Ascending aorta (tissue), 2 donors: ENCODE measurements at regions of chr9 and their contacts with region 1.

Region 1: DNA sequence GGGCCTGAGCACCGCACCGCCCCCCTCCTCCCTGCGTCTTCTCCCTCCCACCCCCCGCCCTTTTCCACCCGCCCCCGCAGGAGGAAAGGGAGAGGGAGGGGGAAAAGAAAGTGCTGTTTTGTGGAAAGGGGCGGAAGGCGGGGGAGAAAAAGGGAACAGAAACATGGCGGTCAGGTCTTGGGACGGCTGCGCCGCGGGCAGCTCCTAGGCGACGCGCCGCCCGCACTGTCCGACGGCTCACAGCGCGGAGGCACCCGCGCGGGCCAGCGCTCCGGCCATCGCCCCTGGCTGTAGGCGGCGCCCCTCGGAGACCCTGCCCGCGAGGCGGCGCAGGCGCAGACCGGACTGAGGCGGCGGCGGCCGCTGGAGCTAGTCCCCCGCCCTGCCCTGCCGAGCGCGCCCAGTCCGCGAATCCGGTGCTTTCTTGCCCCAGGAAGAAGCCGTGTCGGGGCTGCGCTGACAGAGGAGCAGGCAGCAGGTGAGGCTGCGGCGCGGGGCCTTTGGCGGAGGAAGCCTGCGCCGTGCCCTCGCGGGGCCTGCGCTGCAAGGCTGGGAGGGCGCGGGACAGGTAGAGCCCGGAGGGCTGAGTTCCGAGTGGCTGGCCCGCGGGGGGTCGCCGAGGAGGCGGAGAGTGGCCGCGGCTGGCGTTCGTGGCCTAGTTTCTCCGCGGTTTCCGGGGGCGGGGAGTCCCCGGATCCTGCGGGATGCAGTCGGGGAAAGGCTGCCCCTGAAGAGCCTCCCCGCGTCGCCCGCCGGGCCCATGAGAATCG is at the start of gene DENND4C:
- DNase-seq: peak; percentile 44 to 90
- H3K4me3 ChIP-seq: peak within 1 kb of the TSS; percentile 90 to 92
- H3K27ac ChIP-seq: peak within 1 kb of the TSS; percentile 97 to 98
- H3K4me1 ChIP-seq: peaks cover 0 to 18% of the 10 kb centered on the region in 2 donors
- H3K27me3 ChIP-seq: no peaks in the 10 kb centered on the region
- CTCF ChIP-seq: no peak
- total RNA-seq, gene DENND4C: 41.5 TPM

Region 2: GRCh38 chr9:19048966-19049916 is 181.3 kb before region 1 on chr9 and contains the start of gene RRAGA:
- intact Hi-C with region 1: loop called (anchors 2 kb)
- DNase-seq: peak; percentile 70 to 97
- H3K4me3 ChIP-seq: peak within 1 kb of the TSS; percentile 77 to 89
- H3K27ac ChIP-seq: peak within 1 kb of the TSS; percentile 98
- H3K4me1 ChIP-seq: peaks cover 8 to 14% of the 10 kb centered on the region in 2 donors
- H3K27me3 ChIP-seq: no peaks in the 10 kb centered on the region
- CTCF ChIP-seq: peak; percentile 81 to 87 (median 86)
- total RNA-seq, gene RRAGA: 57.3 TPM

Region 3: GRCh38 chr9:19127881-19128500 is 102.5 kb before region 1 on chr9:
- intact Hi-C with region 1: loop called (anchors 2 kb)
- DNase-seq: peak in 1 of 2 donors; percentile 72
- H3K4me3 ChIP-seq: peak overlapping the region; percentile 79 to 85
- H3K27ac ChIP-seq: peak overlapping the region; percentile 96 to 97
- H3K4me1 ChIP-seq: peaks cover 10 to 11% of the 10 kb centered on the region in 2 donors
- H3K27me3 ChIP-seq: no peaks in the 10 kb centered on the region
- CTCF ChIP-seq: no peak

Region 4: GRCh38 chr9:19184144-19184917 is 46.2 kb before region 1 on chr9:
- intact Hi-C with region 1: loop called (anchors 2 kb)
- DNase-seq: peak; percentile 90 to 96
- H3K4me3 ChIP-seq: peak overlapping the region in 1 of 2 donors; percentile 10
- H3K27ac ChIP-seq: peak overlapping the region; percentile 93 to 96
- H3K4me1 ChIP-seq: peaks cover 10 to 18% of the 10 kb centered on the region in 2 donors
- H3K27me3 ChIP-seq: no peaks in the 10 kb centered on the region
- CTCF ChIP-seq: no peak

Region 5: GRCh38 chr9:19379697-19380046 is 149.1 kb after region 1 on chr9:
- intact Hi-C with region 1: loop called (anchors 2 kb)
- DNase-seq: no peak
- H3K4me3 ChIP-seq: peak overlapping the region; percentile 69 to 73
- H3K27ac ChIP-seq: peak overlapping the region; percentile 88 to 91
- H3K4me1 ChIP-seq: peaks cover 0 to 24% of the 10 kb centered on the region in 2 donors
- H3K27me3 ChIP-seq: no peaks in the 10 kb centered on the region
- CTCF ChIP-seq: no peak